SK-N-SH (cell line): ENCODE measurements at regions of chr18 and their contacts with region 1.

Region 1: DNA sequence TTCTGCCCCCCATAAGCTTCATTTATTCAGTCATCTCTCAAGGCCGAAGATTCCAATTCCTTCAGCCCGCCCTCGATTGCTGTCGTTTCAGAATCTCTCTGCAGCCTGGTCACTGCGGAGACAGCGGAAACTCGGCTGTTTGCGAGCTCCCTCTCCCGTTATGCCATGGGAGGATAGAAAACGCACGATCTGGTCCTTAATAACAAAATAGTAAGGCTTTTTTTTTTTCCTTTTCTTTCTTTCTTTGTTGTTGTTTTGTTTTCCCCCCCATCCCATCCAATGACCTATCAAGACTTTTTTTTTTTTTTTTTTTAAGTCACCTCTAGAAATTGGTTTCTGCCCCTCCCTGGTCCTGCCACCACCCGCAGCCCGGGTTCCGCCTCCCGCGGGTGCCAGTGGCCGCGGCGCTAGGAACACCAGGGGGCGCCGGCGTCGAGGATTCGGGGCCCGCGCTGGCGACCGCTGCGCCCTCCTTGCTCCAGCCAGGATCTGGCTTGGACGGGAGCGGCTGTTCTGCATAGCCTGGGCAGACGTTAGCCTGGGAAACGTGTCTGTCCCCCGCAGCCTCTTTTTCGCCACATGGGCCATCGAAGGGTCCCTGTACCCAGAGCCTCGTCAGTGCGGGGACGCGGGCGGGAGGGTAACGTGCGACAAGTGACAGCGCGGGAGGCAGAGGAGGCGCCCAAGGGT is 10.1 kb downstream of the CPLX4 start:
- DNase-seq: peak; percentile 92
- H3K4me3 ChIP-seq: peak overlapping the region; percentile 36 to 65
- H3K27ac ChIP-seq: no peak overlapping the region
- H3K4me1 ChIP-seq: peaks cover 0 to 3% of the 10 kb centered on the region in 2 experiments; a peak in 1 of 4 replicates
- H3K27me3 ChIP-seq: peaks cover 31% of the 10 kb centered on the region; the same call in 1 of the 2 replicates
- CTCF ChIP-seq: peak; percentile 95
- EP300 ChIP-seq: no peak
- RAD21 ChIP-seq: peak; percentile 71

Region 2: GRCh38 chr18:58712930-58713329 is 595.5 kb before region 1 on chr18:
- CTCF ChIA-PET with region 1: no interaction called
- POLR2A ChIA-PET with region 1: no interaction called
- DNase-seq: no peak
- H3K4me3 ChIP-seq: no peak overlapping the region
- H3K27ac ChIP-seq: no peak overlapping the region
- H3K4me1 ChIP-seq: no peaks in the 10 kb centered on the region
- H3K27me3 ChIP-seq: no peaks in the 10 kb centered on the region
- CTCF ChIP-seq: no peak
- EP300 ChIP-seq: no peak
- RAD21 ChIP-seq: no peak

Region 3: GRCh38 chr18:58928386-58928785 is 380.0 kb before region 1 on chr18:
- CTCF ChIA-PET with region 1: no interaction called
- POLR2A ChIA-PET with region 1: no interaction called
- DNase-seq: no peak
- H3K4me3 ChIP-seq: no peak overlapping the region
- H3K27ac ChIP-seq: no peak overlapping the region; a peak in 1 of 4 replicates
- H3K4me1 ChIP-seq: peaks cover 5 to 7% of the 10 kb centered on the region in 2 experiments; a peak in 3 of 4 replicates
- H3K27me3 ChIP-seq: no peaks in the 10 kb centered on the region
- CTCF ChIP-seq: no peak
- EP300 ChIP-seq: no peak
- RAD21 ChIP-seq: no peak

Region 4: DNA sequence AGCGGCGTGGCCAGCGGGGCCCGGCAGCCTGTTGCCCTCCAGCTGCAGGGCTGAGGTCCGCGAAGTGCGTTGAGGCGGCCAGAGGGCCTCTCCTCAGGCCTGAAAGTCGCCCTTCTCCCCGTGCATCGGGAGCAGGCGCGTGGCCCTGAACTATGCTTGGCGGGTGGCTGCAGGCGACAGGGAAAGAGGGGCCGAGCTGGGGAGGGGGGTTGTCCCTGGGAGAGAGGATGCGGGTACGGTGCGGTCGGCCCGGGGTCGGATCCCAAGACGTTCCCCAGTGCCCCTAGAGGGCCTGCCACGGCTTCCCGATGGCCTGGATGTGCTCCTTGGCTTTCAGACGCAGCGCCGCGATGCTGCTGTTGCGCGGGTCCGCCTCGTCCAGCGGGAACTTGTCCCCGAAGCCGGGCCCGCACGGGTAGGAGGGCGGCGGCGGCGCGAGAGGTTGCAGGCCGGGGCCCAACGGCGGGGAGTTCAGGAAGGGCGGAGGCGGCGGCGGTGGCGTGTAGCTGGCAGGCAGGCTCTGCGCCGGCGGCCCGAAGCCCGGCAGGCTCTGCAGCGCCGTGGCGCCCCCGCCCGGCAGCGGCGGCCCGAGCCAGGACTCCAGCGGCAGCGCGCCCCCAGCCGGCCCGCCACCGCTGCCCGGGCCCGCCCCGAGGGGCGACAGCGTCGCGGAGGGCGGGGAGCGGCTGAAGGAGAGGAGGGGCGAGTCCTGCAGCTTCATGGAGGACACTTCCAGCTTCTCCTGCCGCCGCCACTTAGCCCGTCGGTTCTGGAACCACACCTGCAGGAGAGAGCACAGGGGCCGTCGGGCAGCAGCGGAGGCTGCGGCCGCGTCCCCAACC is 39.5 kb before region 1 on chr18:
- CTCF ChIA-PET with region 1: interaction called, 16 read pairs
- POLR2A ChIA-PET with region 1: no interaction called
- DNase-seq: peak; percentile 93
- H3K4me3 ChIP-seq: peak overlapping the region in 1 of 2 experiments; percentile 38; a peak in 3 of 4 replicates
- H3K27ac ChIP-seq: no peak overlapping the region
- H3K4me1 ChIP-seq: peaks cover 4 to 12% of the 10 kb centered on the region in 2 experiments; a peak in 2 of 4 replicates
- H3K27me3 ChIP-seq: peaks cover 98% of the 10 kb centered on the region
- CTCF ChIP-seq: no peak; the same call in none of the 2 replicates
- EP300 ChIP-seq: no peak
- RAD21 ChIP-seq: no peak; the same call in 1 of the 2 replicates

Region 5: DNA sequence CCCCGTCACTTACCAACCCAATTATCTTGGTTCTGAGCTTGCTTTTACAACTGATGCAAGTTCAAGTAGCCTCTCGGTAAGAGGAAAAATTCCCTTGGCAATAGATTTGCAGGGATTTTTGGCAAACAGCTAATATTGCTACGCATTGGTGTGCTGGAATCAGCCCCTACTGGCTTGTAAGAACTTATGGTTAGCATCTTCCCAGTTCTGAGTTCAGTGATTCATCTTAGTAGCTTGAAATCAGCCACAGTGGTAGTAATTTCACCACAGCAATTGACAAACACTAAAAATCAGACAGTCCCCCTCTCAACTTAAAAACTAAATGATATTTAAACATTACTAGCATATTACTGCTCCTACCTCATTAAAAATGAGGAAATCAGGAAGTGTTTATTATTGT is 29.2 kb before region 1 on chr18:
- CTCF ChIA-PET with region 1: interaction called, 15 read pairs
- POLR2A ChIA-PET with region 1: no interaction called
- DNase-seq: no peak
- H3K4me3 ChIP-seq: no peak overlapping the region
- H3K27ac ChIP-seq: no peak overlapping the region
- H3K4me1 ChIP-seq: no peaks in the 10 kb centered on the region
- H3K27me3 ChIP-seq: peaks cover 57% of the 10 kb centered on the region
- CTCF ChIP-seq: no peak
- EP300 ChIP-seq: no peak
- RAD21 ChIP-seq: no peak

Region 6: DNA sequence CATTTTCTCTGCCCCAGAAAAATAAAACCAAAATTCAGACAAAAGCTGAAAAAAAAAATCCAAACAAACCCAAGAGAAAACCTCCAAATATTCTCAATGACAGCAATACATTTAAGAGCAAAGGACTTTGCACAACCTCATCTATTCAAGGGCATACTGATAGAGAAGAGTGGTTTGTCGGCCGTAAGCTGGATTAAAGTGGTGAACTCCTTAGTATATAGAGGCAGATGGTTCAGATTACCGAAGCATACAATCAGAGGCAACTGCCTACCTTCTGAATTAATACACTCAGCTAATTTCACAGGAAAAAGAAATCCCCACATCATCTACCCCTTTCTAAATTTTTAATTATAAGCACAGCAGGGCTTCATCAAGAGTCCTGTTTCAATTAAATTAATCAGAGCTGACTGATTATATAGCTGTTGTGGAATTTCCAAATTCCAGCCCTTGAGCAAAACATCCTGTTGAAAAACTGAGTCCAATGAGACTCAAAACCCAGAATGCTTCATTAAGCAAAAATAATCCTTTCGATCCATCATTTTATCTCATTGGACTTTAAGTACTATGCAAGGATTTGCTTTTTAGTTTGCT is 10.2 kb after region 1 on chr18 and contains the start of gene CPLX4:
- CTCF ChIA-PET with region 1: interaction called, 20 read pairs
- POLR2A ChIA-PET with region 1: no interaction called
- DNase-seq: no peak
- H3K4me3 ChIP-seq: no peak within 1 kb of the TSS
- H3K27ac ChIP-seq: no peak within 1 kb of the TSS
- H3K4me1 ChIP-seq: no peaks in the 10 kb centered on the region
- H3K27me3 ChIP-seq: no peaks in the 10 kb centered on the region
- CTCF ChIP-seq: no peak
- EP300 ChIP-seq: no peak
- RAD21 ChIP-seq: no peak
- polyA plus RNA-seq, gene CPLX4: not detected in 2 replicates